T-cell (primary cell): ENCODE measurements at regions of chr10 and their contacts with region 1.

Region 1: GRCh38 chr10:23516530-23516929 is 77.7 kb downstream of the OTUD1 start:
- DNase-seq: peak in 1 of 35 experiments; percentile 44
- ATAC-seq: no peak
- H3K4me3 ChIP-seq: no peak overlapping the region
- H3K4me3 Mint-ChIP-seq: no peak overlapping the region
- H3K27ac ChIP-seq: no peak overlapping the region
- H3K27ac Mint-ChIP-seq: no peak overlapping the region
- H3K4me1 ChIP-seq: no peaks in the 10 kb centered on the region
- H3K4me1 Mint-ChIP-seq: no peaks in the 10 kb centered on the region
- H3K27me3 ChIP-seq: peaks cover 0 to 14% of the 10 kb centered on the region in 2 experiments
- H3K27me3 Mint-ChIP-seq: peaks cover 18 to 30% of the 10 kb centered on the region in 2 donors

Region 2: GRCh38 chr10:22573820-22574569 is 942.5 kb before region 1 on chr10:
- CTCF ChIA-PET with region 1: no interaction called
- POLR2A ChIA-PET with region 1: no interaction called
- DNase-seq: peak in 27 of 35 experiments; percentile 4 to 72 (median 18)
- ATAC-seq: peak; percentile 49 to 67 (median 53)
- H3K4me3 ChIP-seq: no peak overlapping the region
- H3K4me3 Mint-ChIP-seq: no peak overlapping the region
- H3K27ac ChIP-seq: peak overlapping the region; percentile 40
- H3K27ac Mint-ChIP-seq: peak overlapping the region; percentile 74 to 76
- H3K4me1 ChIP-seq: peaks cover 3 to 36% of the 10 kb centered on the region in 2 experiments
- H3K4me1 Mint-ChIP-seq: peaks cover 60 to 77% (median 75%) of the 10 kb centered on the region in 3 donors
- H3K27me3 ChIP-seq: no peaks in the 10 kb centered on the region
- H3K27me3 Mint-ChIP-seq: no peaks in the 10 kb centered on the region

Region 3: DNA sequence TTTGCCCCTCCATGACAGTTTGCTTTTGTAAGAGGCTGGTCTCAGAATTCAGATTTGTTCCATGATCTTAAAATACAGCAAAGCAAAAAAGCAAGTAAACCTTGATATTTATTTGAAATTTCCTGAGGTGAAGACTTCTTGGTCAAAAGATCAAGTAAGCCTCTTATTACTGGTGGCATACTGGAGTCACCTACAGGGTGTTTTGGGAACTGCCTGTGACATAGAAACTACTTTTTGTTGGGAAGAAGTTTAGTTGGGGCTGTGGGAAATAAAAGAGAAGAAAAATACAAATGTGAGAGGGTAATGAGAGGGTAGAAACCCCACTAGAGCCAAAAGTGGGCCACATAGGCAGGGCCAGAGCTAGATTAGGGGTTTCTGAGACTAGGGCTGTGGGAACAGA is 140.2 kb after region 1 on chr10:
- CTCF ChIA-PET with region 1: interaction called in 1 of 2 experiments, 10 read pairs
- POLR2A ChIA-PET with region 1: no interaction called
- DNase-seq: peak in 1 of 35 experiments; percentile 33
- ATAC-seq: no peak
- H3K4me3 ChIP-seq: no peak overlapping the region
- H3K4me3 Mint-ChIP-seq: no peak overlapping the region
- H3K27ac ChIP-seq: no peak overlapping the region
- H3K27ac Mint-ChIP-seq: no peak overlapping the region
- H3K4me1 ChIP-seq: no peaks in the 10 kb centered on the region
- H3K4me1 Mint-ChIP-seq: no peaks in the 10 kb centered on the region
- H3K27me3 ChIP-seq: peaks cover 0 to 10% of the 10 kb centered on the region in 2 experiments
- H3K27me3 Mint-ChIP-seq: peaks cover 0 to 4% of the 10 kb centered on the region in 2 donors

Region 4: GRCh38 chr10:23742368-23742767 is 225.8 kb after region 1 on chr10:
- CTCF ChIA-PET with region 1: no interaction called
- POLR2A ChIA-PET with region 1: no interaction called
- DNase-seq: no peak
- ATAC-seq: no peak
- H3K4me3 ChIP-seq: no peak overlapping the region
- H3K4me3 Mint-ChIP-seq: no peak overlapping the region
- H3K27ac ChIP-seq: no peak overlapping the region
- H3K27ac Mint-ChIP-seq: no peak overlapping the region
- H3K4me1 ChIP-seq: no peaks in the 10 kb centered on the region
- H3K4me1 Mint-ChIP-seq: no peaks in the 10 kb centered on the region
- H3K27me3 ChIP-seq: no peaks in the 10 kb centered on the region
- H3K27me3 Mint-ChIP-seq: peaks cover 19 to 29% of the 10 kb centered on the region in 2 donors